HEK293 (cell line): ENCODE measurements at regions of chr2 and their contacts with region 1.

Region 1: DNA sequence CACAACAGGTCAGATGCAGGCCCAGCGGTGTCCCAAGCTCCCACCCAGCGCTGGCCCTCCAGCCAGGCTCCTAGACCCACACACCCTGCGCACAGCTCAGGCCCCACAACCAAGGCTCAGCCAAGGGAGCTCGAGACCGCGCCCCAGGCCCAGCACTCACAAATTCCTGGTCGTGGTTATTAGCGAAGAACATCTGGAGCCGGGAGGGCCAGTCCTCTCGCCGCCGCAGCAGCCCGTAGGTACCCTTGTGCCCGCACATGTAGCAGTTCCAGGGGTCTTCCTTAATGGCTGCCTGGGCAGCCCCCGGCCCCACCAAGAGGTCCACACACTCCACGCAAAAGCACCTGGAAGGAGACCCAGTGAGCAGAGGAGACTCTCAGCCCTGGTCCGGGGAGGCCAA is 75.6 kb upstream of the POMC start:
- H3K4me3 ChIP-seq: no peak overlapping the region
- H3K27ac ChIP-seq: no peak overlapping the region
- H3K4me1 ChIP-seq: no peaks in the 10 kb centered on the region
- CTCF ChIP-seq: no peak

Region 2: GRCh38 chr2:24969784-24970183 is 274.2 kb before region 1 on chr2:
- CTCF ChIA-PET with region 1: no interaction called
- POLR2A ChIA-PET with region 1: no interaction called
- H3K4me3 ChIP-seq: no peak overlapping the region
- H3K27ac ChIP-seq: no peak overlapping the region
- H3K4me1 ChIP-seq: no peaks in the 10 kb centered on the region; the same call in 1 of the 2 replicates
- CTCF ChIP-seq: no peak

Region 3: GRCh38 chr2:25078171-25079049 is 165.6 kb before region 1 on chr2:
- CTCF ChIA-PET with region 1: no interaction called
- POLR2A ChIA-PET with region 1: no interaction called
- H3K4me3 ChIP-seq: peak overlapping the region; percentile 4; the same call in 1 of the 2 replicates
- H3K27ac ChIP-seq: peak overlapping the region; percentile 8; the same call in 1 of the 2 replicates
- H3K4me1 ChIP-seq: peaks cover 21% of the 10 kb centered on the region
- CTCF ChIP-seq: no peak

Region 4: GRCh38 chr2:25228848-25229278 is 15.1 kb before region 1 on chr2:
- CTCF ChIA-PET with region 1: interaction called, 18 read pairs
- POLR2A ChIA-PET with region 1: no interaction called
- H3K4me3 ChIP-seq: no peak overlapping the region
- H3K27ac ChIP-seq: no peak overlapping the region
- H3K4me1 ChIP-seq: peaks cover 2% of the 10 kb centered on the region; the same call in 1 of the 2 replicates
- CTCF ChIP-seq: peak; percentile 81